Common myeloid progenitor, CD34-positive (primary cell): ENCODE measurements at regions of chr16 and their contacts with region 1.

Region 1: GRCh38 chr16:27401768-27402568 is at the start of gene IL21R:
- DNase-seq: peak; percentile 88 to 99 (median 96)
- H3K4me3 ChIP-seq: peak within 1 kb of the TSS in 6 of 7 experiments; percentile 23 to 59 (median 29)
- H3K27ac ChIP-seq: peak within 1 kb of the TSS in 1 of 2 experiments; percentile 46
- H3K4me1 ChIP-seq: peaks cover 2 to 79% (median 48%) of the 10 kb centered on the region in 4 experiments
- H3K27me3 ChIP-seq: no peaks in the 10 kb centered on the region

Region 2: DNA sequence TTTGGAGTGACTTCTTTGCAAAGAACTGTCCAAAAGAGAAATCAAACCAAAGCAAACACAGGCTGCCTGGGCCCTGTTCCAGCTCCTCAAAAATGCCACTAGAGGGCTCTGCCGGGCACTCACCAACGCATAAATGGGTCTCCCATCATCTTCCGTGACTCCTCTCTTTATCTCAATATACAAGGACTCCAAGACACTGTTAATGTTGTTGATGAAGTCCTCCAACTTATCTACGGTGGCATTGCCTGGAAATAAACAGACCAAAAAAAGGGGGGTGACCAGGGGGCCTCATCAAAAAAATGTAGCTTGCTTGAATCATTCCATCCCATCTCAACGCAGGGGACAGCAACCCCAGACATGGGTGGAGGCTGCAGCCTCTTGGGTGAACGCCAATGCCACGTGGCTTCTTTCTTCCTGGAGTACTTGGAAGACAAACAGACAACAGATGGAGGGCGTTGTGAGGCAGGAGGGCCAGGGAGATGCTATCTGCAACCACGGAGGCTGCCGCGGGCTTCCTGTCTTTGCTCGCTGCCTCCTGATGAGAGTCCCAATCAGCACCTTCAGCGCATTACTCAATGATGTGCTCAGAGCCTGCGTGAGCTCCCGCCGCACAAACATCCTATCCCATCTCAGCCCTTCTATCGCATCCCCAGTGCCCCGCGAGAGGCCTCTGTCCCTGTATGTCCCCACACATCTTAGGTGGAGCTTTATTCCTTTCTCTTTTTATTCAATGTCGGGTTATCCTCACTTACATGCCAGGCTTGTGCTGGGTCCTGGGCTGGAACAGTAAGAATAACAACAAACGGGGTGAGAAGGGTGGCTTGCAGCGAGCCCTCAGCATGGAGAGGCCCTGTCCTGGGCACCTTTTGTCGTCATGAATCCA is 166.7 kb before region 1 on chr16:
- CTCF ChIA-PET with region 1: interaction called, 10 read pairs
- POLR2A ChIA-PET with region 1: no interaction called
- DNase-seq: peak; percentile 95 to 99 (median 98)
- H3K4me3 ChIP-seq: peak overlapping the region in 4 of 7 experiments; percentile 21 to 43 (median 34)
- H3K27ac ChIP-seq: peak overlapping the region; percentile 48 to 79
- H3K4me1 ChIP-seq: peaks cover 15 to 99% (median 93%) of the 10 kb centered on the region in 4 experiments
- H3K27me3 ChIP-seq: no peaks in the 10 kb centered on the region

Region 3: GRCh38 chr16:27253526-27253930 is 148.4 kb before region 1 on chr16:
- CTCF ChIA-PET with region 1: no interaction called
- POLR2A ChIA-PET with region 1: no interaction called
- DNase-seq: no peak
- H3K4me3 ChIP-seq: no peak overlapping the region
- H3K27ac ChIP-seq: no peak overlapping the region
- H3K4me1 ChIP-seq: peaks cover 0 to 4% (median 0%) of the 10 kb centered on the region in 4 experiments
- H3K27me3 ChIP-seq: no peaks in the 10 kb centered on the region

Region 4: GRCh38 chr16:27367461-27368357 is 34.3 kb before region 1 on chr16:
- CTCF ChIA-PET with region 1: interaction called, 35 read pairs
- POLR2A ChIA-PET with region 1: interaction called, 9 read pairs
- DNase-seq: peak; percentile 98 to 99 (median 99)
- H3K4me3 ChIP-seq: peak overlapping the region in 5 of 7 experiments; percentile 13 to 54 (median 45)
- H3K27ac ChIP-seq: peak overlapping the region; percentile 90 to 93
- H3K4me1 ChIP-seq: peaks cover 4 to 35% (median 30%) of the 10 kb centered on the region in 4 experiments
- H3K27me3 ChIP-seq: no peaks in the 10 kb centered on the region

Region 5: GRCh38 chr16:27374804-27375425 is 27.1 kb before region 1 on chr16:
- CTCF ChIA-PET with region 1: interaction called, 35 read pairs
- POLR2A ChIA-PET with region 1: interaction called, 4 read pairs
- DNase-seq: peak; percentile 76 to 86 (median 81)
- H3K4me3 ChIP-seq: peak overlapping the region in 1 of 7 experiments; percentile 6
- H3K27ac ChIP-seq: no peak overlapping the region
- H3K4me1 ChIP-seq: peaks cover 2 to 60% (median 46%) of the 10 kb centered on the region in 4 experiments
- H3K27me3 ChIP-seq: no peaks in the 10 kb centered on the region

Region 6: GRCh38 chr16:27387724-27388123 is 14.2 kb before region 1 on chr16:
- CTCF ChIA-PET with region 1: interaction called, 28 read pairs
- POLR2A ChIA-PET with region 1: interaction called, 4 read pairs
- DNase-seq: no peak
- H3K4me3 ChIP-seq: no peak overlapping the region
- H3K27ac ChIP-seq: no peak overlapping the region
- H3K4me1 ChIP-seq: peaks cover 4 to 27% (median 6%) of the 10 kb centered on the region in 4 experiments
- H3K27me3 ChIP-seq: no peaks in the 10 kb centered on the region

Region 7: DNA sequence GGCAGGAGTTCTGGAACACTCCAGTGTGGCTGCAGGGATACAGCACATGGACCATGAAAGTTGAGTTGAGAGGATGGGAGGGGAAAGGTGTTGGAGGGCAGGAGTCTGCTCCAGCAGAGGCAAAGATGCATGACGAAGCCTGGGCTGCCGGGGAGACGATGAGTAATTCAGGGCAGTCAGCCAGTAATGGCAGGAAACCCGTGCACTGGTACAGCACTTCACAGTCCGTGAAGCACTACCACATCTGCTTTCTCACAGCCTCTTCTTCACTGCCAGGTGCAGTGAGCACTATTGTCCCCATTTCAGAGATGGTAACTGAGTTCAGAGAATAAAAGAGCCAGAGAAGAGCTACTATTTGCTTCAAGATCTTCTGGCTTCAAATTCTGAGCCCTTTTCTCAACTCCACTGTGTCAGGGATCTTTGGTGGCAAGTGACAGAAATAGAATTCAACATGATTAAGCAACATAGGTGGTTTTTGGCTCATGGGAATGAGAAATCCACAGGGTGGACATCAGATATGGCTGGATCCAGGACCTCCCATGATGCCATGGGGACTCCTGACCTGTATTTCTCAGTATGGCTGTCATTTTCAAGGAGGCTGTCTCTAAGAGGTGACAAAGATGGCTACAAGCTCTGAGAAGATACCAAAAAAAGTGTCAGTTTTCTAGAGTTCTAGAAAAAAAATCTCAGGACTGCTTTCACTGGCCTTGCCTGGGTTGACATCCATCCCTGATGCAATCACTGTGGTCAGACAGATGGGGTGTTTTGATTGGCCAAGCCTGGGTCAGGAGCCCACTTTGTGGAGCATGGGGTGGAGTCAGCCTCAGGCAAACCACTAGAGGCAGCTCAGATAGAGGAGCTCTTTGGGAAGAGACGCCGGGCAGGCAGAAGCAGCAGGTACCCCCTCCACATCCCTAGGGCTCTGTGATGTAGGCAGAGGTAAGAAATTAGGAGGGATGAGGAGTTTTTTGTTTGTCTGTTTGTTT is 24.7 kb after region 1 on chr16:
- CTCF ChIA-PET with region 1: interaction called, 33 read pairs
- POLR2A ChIA-PET with region 1: interaction called, 28 read pairs
- DNase-seq: peak; percentile 65 to 95 (median 92)
- H3K4me3 ChIP-seq: peak overlapping the region in 1 of 7 experiments; percentile 25
- H3K27ac ChIP-seq: no peak overlapping the region
- H3K4me1 ChIP-seq: peaks cover 4 to 48% (median 26%) of the 10 kb centered on the region in 4 experiments
- H3K27me3 ChIP-seq: no peaks in the 10 kb centered on the region

Region 8: GRCh38 chr16:27455700-27456099 is 53.7 kb after region 1 on chr16:
- CTCF ChIA-PET with region 1: interaction called, 21 read pairs
- POLR2A ChIA-PET with region 1: no interaction called
- DNase-seq: peak in 2 of 3 donors; percentile 66 to 76
- H3K4me3 ChIP-seq: peak overlapping the region in 1 of 7 experiments; percentile 44
- H3K27ac ChIP-seq: no peak overlapping the region
- H3K4me1 ChIP-seq: peaks cover 2 to 40% (median 29%) of the 10 kb centered on the region in 4 experiments
- H3K27me3 ChIP-seq: no peaks in the 10 kb centered on the region

Region 9: DNA sequence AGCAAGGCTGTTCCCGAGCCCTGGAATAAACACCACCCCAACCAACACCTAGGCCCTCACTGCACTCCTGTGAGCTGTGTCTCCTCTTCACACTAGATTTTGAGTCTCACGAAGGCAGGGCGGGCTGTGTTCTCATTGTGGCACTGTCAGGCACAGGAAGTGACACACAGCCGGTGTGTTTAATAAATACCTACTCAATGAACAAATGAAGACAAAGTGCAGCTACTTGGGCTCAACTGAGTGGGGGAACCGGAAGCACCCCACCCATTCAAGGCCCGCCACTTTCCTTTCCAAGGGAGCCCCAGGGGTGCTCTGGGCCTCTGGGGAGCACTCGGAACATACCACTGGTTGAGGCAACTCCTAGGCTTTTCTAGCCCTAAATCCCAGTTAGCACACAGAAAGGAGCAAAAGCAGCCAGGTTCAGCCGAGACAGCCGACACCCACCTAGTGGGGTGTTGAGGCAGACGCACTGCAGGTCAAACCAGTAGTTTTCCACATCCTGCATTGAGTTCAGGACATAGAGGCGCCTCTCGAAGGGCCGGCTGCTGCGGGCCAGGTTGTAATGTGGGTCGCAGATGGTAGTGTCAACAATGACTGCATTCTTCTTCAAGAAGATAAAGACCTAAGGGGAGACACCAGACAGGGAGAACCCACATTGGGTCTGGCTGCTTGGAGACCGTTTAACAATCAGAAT is 90.1 kb after region 1 on chr16:
- CTCF ChIA-PET with region 1: no interaction called
- POLR2A ChIA-PET with region 1: no interaction called
- DNase-seq: no peak
- H3K4me3 ChIP-seq: no peak overlapping the region
- H3K27ac ChIP-seq: no peak overlapping the region
- H3K4me1 ChIP-seq: no peaks in the 10 kb centered on the region
- H3K27me3 ChIP-seq: no peaks in the 10 kb centered on the region